HEK293T (cell line): ENCODE measurements at regions of chr2 and their contacts with region 1.

Region 1: GRCh38 chr2:27071277-27071989 is at the start of gene OST4:
- DNase-seq: peak; percentile 96

Region 2: DNA sequence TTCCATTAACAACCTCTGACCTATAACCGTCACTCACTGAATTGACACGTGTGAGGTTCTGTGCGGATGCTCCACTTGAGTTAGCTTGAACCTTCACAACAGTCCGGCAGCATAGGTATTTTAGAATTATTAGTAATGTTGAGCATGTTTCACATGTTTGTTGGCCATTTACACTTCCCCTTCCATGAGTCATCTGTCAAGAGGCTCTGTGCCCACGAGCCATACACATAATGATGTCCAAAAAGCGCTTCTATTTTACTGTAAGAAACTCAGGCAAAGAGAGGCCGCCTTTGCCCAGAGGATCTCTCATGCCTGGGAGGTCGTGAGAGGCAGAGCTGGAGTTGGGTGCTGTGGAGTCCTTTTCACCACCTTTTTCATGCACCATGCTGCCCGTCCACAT is 67.6 kb before region 1 on chr2:
- CTCF ChIA-PET with region 1: no interaction called
- POLR2A ChIA-PET with region 1: no interaction called
- DNase-seq: no peak

Region 3: DNA sequence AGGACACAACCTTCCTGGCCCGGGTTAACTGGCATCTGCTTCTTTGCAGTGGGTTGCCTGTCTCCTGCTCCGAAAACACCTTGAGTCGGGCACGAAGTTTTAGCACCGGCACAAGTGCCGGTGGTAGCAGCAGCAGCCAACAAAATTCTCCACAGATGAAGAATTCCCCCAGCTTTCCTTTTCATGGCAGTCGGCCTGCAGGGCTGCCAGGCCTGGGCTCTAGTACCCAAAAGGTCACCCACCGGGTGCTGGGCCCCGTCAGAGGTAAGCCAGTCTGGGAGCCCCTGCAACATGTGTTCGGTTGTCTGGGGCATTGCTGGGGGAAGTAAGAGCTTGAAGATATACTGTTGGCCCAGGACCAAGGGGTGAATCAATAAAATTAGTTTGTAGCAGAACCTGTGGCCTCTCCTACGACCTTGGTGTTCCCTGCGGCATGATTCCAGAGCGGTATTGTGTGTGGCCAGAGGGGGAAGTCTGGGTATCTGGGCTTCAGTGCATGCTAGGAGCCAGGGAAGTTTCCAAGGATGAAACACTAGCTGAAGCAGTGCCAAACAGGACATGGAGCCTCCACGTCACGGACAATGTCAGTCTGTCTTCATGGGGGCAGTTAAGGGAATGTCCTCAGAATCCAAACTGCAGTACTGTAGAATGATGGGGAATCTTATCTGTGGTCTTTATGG is 12.2 kb before region 1 on chr2:
- CTCF ChIA-PET with region 1: no interaction called
- POLR2A ChIA-PET with region 1: interaction called, 91 read pairs
- DNase-seq: no peak

Region 4: GRCh38 chr2:27086090-27086723 is 14.8 kb after region 1 on chr2:
- CTCF ChIA-PET with region 1: interaction called, 4 read pairs
- POLR2A ChIA-PET with region 1: interaction called, 76 read pairs
- DNase-seq: peak; percentile 98

Region 5: DNA sequence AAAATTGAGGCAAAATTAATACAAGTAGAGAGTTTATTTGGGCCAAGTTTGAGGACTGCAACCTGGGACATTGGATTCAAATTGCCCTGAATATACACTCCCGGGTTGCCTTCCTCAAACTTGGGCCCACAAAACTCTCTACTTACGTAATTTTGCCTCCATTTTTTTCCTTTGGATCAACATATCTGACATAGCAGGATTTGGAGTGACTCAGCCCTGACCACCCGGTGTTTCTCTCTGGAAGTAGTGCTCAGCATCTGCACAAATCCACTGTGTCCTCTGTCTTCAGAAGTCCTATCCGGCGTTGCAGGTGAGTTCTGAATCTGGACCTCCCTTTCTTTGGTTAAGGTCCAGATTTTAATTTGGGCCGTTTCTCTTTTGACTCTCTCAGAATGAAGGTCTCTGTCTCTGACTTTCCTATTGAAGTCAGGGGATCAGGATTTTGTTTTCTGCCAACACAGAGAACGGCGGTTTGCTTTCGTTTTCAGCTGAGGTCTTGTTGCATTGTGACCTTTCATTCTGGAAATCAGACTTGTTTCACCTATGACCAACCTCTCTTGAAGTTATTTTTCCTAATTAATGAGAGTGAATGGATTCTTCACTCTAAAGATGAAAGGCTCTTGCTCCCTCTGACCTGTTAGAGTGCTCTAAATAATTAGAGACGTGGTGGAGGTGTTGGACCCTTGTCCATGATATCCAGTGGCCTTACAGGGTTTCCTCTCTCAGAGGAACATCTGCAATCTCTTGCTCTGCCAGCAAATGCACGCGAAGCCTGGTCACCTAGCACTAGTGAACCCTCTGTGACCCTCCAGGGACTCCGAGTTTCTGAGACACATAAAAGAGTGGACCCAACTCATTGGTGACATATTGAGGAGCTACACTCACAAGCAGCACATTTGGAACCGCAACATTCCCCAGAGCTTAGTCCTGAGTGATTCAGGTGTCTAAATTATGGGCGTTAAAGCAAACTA is 91.0 kb after region 1 on chr2:
- CTCF ChIA-PET with region 1: no interaction called
- POLR2A ChIA-PET with region 1: no interaction called
- DNase-seq: no peak